ENCODE measurements at regions of chr5 and their contacts with region 1.

Region 1: GRCh38 chr5:174418928-174419796 is 305.2 kb upstream of the MSX2 start:
- DNase-seq: peak; percentile 77
- H3K4me3 ChIP-seq: peak overlapping the region; percentile 32 to 54
- H3K27ac ChIP-seq: no peak overlapping the region; a peak in 2 of 4 replicates
- H3K4me1 ChIP-seq: peaks cover 0 to 21% of the 10 kb centered on the region in 2 experiments; a peak in 2 of 4 replicates
- H3K27me3 ChIP-seq: no peaks in the 10 kb centered on the region
- CTCF ChIP-seq: peak; percentile 95
- EP300 ChIP-seq: no peak
- RAD21 ChIP-seq: peak; percentile 99

Region 2: GRCh38 chr5:174327317-174328236 is 91.6 kb before region 1 on chr5:
- CTCF ChIA-PET with region 1: interaction called, 141 read pairs
- POLR2A ChIA-PET with region 1: interaction called, 6 read pairs
- DNase-seq: peak; percentile 77
- H3K4me3 ChIP-seq: no peak overlapping the region; a peak in 1 of 4 replicates
- H3K27ac ChIP-seq: peak overlapping the region in 1 of 2 experiments; percentile 95; a peak in 2 of 4 replicates
- H3K4me1 ChIP-seq: peaks cover 17 to 50% of the 10 kb centered on the region in 2 experiments
- H3K27me3 ChIP-seq: no peaks in the 10 kb centered on the region
- CTCF ChIP-seq: peak; percentile 97
- EP300 ChIP-seq: peak in 1 of 2 experiments; percentile 23; a peak in 1 of 4 replicates
- RAD21 ChIP-seq: peak; percentile 90

Region 3: GRCh38 chr5:174409070-174409469 is 10.1 kb before region 1 on chr5:
- CTCF ChIA-PET with region 1: interaction called, 28 read pairs
- POLR2A ChIA-PET with region 1: no interaction called
- DNase-seq: no peak
- H3K4me3 ChIP-seq: no peak overlapping the region
- H3K27ac ChIP-seq: no peak overlapping the region
- H3K4me1 ChIP-seq: peaks cover 17% of the 10 kb centered on the region in 2 experiments
- H3K27me3 ChIP-seq: no peaks in the 10 kb centered on the region
- CTCF ChIP-seq: peak; percentile 45
- EP300 ChIP-seq: no peak
- RAD21 ChIP-seq: no peak

Region 4: GRCh38 chr5:174523311-174524071 is 104.3 kb after region 1 on chr5:
- CTCF ChIA-PET with region 1: interaction called, 11 read pairs
- POLR2A ChIA-PET with region 1: no interaction called
- DNase-seq: no peak
- H3K4me3 ChIP-seq: no peak overlapping the region
- H3K27ac ChIP-seq: no peak overlapping the region
- H3K4me1 ChIP-seq: peaks cover 0 to 11% of the 10 kb centered on the region in 2 experiments; a peak in 2 of 4 replicates
- H3K27me3 ChIP-seq: no peaks in the 10 kb centered on the region
- CTCF ChIP-seq: peak; percentile 34
- EP300 ChIP-seq: no peak
- RAD21 ChIP-seq: peak; percentile 23; the same call in 1 of the 2 replicates

Region 5: DNA sequence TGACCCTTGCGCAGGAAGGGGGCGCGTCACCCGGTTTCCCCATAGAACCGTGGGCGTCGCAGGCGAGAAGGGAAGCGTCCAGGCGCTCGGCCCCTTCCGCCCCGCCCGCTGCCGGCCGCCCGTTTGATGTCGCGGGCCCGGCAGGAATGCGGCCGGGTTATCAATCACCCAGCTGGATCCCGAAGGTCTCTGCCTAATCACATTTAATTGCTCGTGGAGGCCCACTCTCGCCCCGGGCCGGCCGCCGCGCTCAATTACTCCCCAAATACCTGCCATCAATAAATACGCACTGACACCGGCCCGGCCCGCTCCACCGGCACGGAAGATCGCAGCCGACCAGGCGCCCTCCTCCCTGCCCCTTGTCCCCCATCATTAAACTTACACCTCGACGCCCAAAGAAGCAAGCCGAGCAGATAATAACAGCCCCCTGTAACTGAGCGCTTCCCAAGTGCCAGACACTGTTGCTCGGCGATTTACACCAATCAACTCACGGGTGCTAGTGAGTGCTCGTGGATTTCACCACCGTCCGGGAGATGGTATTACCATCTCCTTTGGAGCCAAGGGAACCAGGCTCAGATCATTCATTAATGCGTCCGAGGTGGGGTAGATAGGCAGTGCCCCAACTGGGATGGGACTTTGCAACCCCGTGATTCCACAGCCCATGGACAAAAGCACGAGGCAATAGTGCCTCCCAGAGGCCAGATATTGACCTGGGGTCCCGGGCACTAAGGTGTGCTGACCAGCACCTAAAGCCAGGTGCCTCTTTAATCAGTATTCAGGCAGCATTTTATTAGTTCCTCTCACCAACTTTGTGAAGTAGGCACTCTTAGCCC is 316.6 kb after region 1 on chr5:
- CTCF ChIA-PET with region 1: interaction called, 192 read pairs
- POLR2A ChIA-PET with region 1: no interaction called
- DNase-seq: peak; percentile 89
- H3K4me3 ChIP-seq: peak overlapping the region; percentile 39 to 63
- H3K27ac ChIP-seq: no peak overlapping the region
- H3K4me1 ChIP-seq: peaks cover 3 to 12% of the 10 kb centered on the region in 2 experiments; a peak in 1 of 4 replicates
- H3K27me3 ChIP-seq: peaks cover 4% of the 10 kb centered on the region
- CTCF ChIP-seq: peak; percentile 70
- EP300 ChIP-seq: no peak
- RAD21 ChIP-seq: peak; percentile 93

Region 6: DNA sequence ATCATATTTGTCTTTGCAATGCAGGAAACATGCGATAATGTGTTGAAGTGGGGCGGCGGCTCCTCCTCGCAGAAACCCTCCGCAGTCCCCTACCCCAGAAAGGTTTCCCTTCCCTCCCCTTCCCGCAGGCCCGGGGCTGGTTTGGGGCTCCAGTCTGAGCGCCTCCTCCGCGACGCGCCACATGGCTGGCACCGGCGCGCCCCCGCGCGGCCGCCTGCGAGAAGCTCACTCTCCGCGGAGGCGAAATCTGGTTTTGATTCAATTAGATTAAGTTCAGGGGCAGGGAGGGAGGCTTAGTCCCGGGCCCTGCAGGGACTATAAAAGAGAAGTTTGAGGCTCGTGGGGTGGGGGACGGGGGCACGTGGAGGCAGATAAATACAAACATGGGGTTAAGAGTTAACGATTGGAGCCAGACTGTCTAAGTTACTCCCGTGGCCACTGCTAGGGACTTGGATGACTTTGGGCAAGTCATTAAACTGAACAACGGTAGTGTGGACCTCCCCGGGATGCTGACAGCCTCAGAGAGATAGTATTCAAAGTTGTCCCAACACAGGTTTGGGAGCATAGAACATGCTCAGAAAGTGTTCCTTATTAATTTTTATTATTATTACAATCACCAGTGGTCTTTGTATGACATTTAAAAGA is 374.6 kb after region 1 on chr5:
- CTCF ChIA-PET with region 1: interaction called, 29 read pairs
- POLR2A ChIA-PET with region 1: no interaction called
- DNase-seq: peak; percentile 90
- H3K4me3 ChIP-seq: no peak overlapping the region; a peak in 1 of 4 replicates
- H3K27ac ChIP-seq: no peak overlapping the region; a peak in 1 of 4 replicates
- H3K4me1 ChIP-seq: peaks cover 0 to 14% of the 10 kb centered on the region in 2 experiments; a peak in 1 of 4 replicates
- H3K27me3 ChIP-seq: no peaks in the 10 kb centered on the region; the same call in none of the 2 replicates
- CTCF ChIP-seq: peak; percentile 93
- EP300 ChIP-seq: no peak
- RAD21 ChIP-seq: peak; percentile 80

Measured in SK-N-SH (cell line).